ENCODE measurements at regions of chr9 and their contacts with region 1.

Region 1: DNA sequence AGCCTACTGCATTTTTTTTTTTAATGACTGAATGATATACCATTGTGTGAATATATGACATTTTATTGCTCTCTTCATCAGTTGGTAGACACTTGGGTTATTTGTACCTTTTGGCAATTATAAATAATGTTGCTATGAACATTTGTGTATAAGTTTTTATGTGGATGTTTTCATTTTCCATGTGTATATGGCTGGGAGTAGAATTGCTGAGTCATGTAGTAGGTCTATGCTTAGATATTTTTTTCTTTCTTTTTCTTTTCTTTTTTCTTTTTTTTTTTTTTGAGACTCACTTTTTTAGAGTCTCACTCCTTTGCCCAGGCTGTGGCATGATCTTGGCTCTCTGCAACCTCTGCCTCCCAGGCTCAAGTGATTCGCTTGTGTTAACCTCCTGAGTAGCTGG is 32.9 kb upstream of the FAM120AOS start:
- DNase-seq: no peak
- H3K4me3 ChIP-seq: no peak overlapping the region
- H3K27ac ChIP-seq: no peak overlapping the region
- H3K4me1 ChIP-seq: no peaks in the 10 kb centered on the region
- H3K27me3 ChIP-seq: no peaks in the 10 kb centered on the region
- CTCF ChIP-seq: no peak
- POLR2A ChIP-seq: no peak

Region 2: DNA sequence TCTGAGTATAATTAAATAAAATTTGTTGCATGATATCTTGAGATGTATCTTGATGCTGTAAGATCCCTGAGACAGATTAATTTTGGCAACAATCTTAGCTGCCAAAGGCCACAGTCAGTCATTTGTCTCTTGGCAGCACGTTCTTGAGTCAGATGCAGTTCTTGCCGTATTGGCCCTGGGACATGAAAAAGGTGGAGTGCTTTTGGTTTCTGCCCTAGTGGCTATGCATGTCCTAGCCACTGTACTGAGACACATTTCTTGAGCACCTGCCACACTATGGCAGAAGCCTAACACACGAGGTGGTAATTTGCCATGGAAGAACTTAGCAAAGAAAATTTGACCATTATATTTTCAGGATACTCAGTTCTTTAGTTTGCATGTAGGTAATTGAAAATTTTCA is 45.1 kb after region 1 on chr9:
- intact Hi-C with region 1: loop called (anchors 5 kb)
- DNase-seq: no peak
- H3K4me3 ChIP-seq: no peak overlapping the region
- H3K27ac ChIP-seq: peak overlapping the region in 1 of 2 donors; percentile 69
- H3K4me1 ChIP-seq: peaks cover 6% of the 10 kb centered on the region
- H3K27me3 ChIP-seq: no peaks in the 10 kb centered on the region
- CTCF ChIP-seq: peak in 1 of 4 experiments; percentile 18
- POLR2A ChIP-seq: no peak

Region 3: GRCh38 chr9:93566408-93567270 is 80.4 kb after region 1 on chr9:
- intact Hi-C with region 1: no loop called
- DNase-seq: peak; percentile 97
- H3K4me3 ChIP-seq: peak overlapping the region; percentile 44 to 47
- H3K27ac ChIP-seq: peak overlapping the region; percentile 91 to 94
- H3K4me1 ChIP-seq: no peaks in the 10 kb centered on the region
- H3K27me3 ChIP-seq: no peaks in the 10 kb centered on the region
- CTCF ChIP-seq: peak; percentile 87 to 98 (median 98)
- POLR2A ChIP-seq: peak; percentile 95